ENCODE measurements at regions of chr12 and their contacts with region 1.

Region 1: GRCh38 chr12:27488479-27488878 is 35.5 kb upstream of the PPFIBP1 start:
- DNase-seq: no peak
- H3K4me3 ChIP-seq: no peak overlapping the region
- H3K27me3 ChIP-seq: no peaks in the 10 kb centered on the region
- CTCF ChIP-seq: no peak

Region 2: DNA sequence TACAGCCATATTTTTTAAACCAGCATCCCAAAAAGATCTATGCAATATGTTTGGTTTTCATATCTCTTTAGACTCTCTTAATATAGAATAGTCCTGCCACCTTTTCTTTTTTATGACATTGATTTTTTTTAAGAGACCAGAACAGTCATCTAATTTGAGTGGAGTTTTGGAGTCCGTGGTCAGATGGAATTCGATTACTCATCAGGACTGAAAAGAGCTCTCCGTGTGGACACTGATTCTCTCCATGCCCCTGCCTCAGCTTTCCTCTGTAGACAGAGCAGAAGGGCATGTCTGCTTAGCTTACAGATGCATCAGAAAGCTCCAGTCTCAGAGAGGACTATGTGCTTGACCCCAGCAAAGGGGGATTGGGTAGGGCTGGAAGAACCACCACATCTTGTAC is 14.1 kb before region 1 on chr12:
- CTCF ChIA-PET with region 1: interaction called, 3 read pairs
- POLR2A ChIA-PET with region 1: interaction called, 12 read pairs
- DNase-seq: peak; percentile 54
- H3K4me3 ChIP-seq: no peak overlapping the region
- H3K27me3 ChIP-seq: no peaks in the 10 kb centered on the region
- CTCF ChIP-seq: no peak

Region 3: DNA sequence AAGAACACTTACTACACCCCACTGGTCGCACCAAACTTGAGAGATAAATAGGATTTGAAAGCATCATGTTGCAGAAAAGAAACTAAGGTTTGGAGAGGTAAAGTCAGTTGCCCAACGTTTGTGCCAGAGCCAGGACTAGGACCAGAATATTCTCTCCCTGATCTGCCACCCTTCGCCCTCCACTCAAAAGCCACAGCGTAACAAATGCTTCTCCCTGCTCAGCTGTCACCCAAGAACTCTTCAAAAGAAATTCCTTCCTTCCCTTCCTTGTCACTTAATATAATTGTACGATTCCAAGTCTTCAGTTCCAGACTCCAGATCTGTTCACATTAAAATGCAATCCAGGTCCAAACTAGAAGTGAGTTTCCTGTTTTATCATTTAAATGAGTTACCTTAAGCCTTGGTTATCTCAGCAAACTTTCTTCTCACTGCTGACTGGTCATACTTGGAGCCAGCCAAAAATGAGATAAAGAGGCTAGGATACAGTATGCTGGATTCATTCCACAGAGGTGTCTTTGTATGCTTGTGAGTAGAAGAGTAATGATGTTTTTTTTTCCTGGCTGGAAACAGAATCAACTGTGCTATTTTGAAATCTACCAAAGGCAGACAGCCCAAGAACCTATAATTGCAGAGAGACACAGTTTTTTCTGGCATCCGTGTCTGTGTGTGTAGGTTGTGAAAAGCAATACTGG is 22.7 kb after region 1 on chr12:
- CTCF ChIA-PET with region 1: no interaction called
- POLR2A ChIA-PET with region 1: no interaction called
- DNase-seq: no peak
- H3K4me3 ChIP-seq: no peak overlapping the region
- H3K27me3 ChIP-seq: no peaks in the 10 kb centered on the region; the same call in 1 of the 2 replicates
- CTCF ChIP-seq: no peak

Measured in BJ (cell line).